ENCODE measurements at regions of chr5 and their contacts with region 1.

Region 1: DNA sequence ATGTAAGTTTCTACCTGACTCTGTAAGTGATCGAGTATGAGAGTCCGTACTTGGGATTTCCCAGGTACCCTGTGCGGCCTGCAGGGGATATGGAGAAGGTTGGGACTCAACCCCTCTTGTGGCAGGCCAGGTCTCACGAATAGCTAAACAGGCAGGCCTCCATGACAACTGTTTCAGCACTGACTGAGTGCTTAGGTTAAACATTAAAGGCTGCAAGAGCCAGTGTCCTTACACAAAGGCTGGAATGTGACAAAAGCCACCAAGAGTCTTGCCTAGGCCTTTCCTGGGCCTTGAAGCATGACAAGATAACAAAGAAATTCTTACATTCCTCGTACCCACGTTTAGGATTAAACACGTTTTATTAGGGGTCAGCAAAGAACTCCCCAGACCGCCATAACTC is 58.6 kb downstream of the THBS4 start:
- DNase-seq: no peak
- ATAC-seq: peak; percentile 41 to 75 (median 49)
- H3K4me3 ChIP-seq: no peak overlapping the region
- H3K27ac ChIP-seq: no peak overlapping the region
- H3K4me1 ChIP-seq: peaks cover 0 to 7% (median 0%) of the 10 kb centered on the region in 4 donors
- H3K27me3 ChIP-seq: no peaks in the 10 kb centered on the region
- CTCF ChIP-seq: no peak
- POLR2A ChIP-seq: no peak

Region 2: GRCh38 chr5:80275347-80275746 is 181.6 kb after region 1 on chr5:
- intact Hi-C with region 1: loop called in 1 of 2 experiments (anchors 10 kb)
- DNase-seq: no peak
- ATAC-seq: peak; percentile 63 to 78 (median 74)
- H3K4me3 ChIP-seq: no peak overlapping the region
- H3K27ac ChIP-seq: no peak overlapping the region
- H3K4me1 ChIP-seq: no peaks in the 10 kb centered on the region
- H3K27me3 ChIP-seq: no peaks in the 10 kb centered on the region
- CTCF ChIP-seq: peak; percentile 34 to 50 (median 48)
- POLR2A ChIP-seq: no peak

Region 3: DNA sequence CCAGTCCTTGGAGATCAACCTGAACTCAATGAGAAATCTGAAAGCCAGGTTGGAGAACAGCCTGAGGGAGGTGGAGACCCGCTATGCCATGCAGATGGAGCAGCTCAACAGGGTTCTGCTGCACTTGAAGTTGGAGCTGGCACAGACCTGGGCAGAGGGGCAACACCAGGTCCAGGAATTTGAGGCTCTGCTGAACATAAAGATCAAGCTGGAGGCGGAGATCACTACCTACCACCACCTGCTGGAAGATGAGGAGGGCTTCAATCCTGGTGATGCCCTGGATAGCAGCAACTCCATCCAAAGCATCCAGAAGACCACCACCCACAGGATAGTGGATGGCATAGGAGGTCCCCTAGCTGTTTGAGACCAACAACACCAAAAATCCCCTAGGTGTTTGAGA is 195.5 kb after region 1 on chr5:
- intact Hi-C with region 1: no loop called
- DNase-seq: peak in 1 of 3 donors; percentile 18
- ATAC-seq: no peak
- H3K4me3 ChIP-seq: no peak overlapping the region
- H3K27ac ChIP-seq: no peak overlapping the region
- H3K4me1 ChIP-seq: no peaks in the 10 kb centered on the region
- H3K27me3 ChIP-seq: no peaks in the 10 kb centered on the region
- CTCF ChIP-seq: no peak
- POLR2A ChIP-seq: no peak

Region 4: DNA sequence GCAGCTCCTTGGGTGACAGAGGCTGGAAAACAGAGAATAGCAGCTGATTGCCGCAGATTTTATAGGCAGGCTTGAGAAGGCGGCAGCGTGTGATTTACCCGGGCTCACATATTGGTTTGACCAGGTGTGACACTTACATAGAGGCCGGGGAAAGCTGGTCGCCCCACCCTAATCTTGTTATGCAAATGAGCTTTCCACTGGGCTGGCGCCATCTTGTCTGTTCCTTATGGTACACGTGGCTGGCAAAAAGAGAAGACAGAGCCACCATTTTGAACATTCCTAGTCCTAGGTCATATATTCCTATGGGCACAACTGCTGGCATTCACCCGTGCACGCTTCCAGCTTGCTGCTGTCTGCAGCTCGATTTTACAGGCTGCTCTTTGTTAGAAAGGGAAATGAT is 214.7 kb after region 1 on chr5:
- intact Hi-C with region 1: loop called in 1 of 2 experiments (anchors 5 kb)
- DNase-seq: no peak
- ATAC-seq: no peak
- H3K4me3 ChIP-seq: no peak overlapping the region
- H3K27ac ChIP-seq: no peak overlapping the region
- H3K4me1 ChIP-seq: no peaks in the 10 kb centered on the region
- H3K27me3 ChIP-seq: no peaks in the 10 kb centered on the region
- CTCF ChIP-seq: no peak
- POLR2A ChIP-seq: no peak